ENCODE measurements at regions of chr22 and their contacts with region 1.

Region 1: DNA sequence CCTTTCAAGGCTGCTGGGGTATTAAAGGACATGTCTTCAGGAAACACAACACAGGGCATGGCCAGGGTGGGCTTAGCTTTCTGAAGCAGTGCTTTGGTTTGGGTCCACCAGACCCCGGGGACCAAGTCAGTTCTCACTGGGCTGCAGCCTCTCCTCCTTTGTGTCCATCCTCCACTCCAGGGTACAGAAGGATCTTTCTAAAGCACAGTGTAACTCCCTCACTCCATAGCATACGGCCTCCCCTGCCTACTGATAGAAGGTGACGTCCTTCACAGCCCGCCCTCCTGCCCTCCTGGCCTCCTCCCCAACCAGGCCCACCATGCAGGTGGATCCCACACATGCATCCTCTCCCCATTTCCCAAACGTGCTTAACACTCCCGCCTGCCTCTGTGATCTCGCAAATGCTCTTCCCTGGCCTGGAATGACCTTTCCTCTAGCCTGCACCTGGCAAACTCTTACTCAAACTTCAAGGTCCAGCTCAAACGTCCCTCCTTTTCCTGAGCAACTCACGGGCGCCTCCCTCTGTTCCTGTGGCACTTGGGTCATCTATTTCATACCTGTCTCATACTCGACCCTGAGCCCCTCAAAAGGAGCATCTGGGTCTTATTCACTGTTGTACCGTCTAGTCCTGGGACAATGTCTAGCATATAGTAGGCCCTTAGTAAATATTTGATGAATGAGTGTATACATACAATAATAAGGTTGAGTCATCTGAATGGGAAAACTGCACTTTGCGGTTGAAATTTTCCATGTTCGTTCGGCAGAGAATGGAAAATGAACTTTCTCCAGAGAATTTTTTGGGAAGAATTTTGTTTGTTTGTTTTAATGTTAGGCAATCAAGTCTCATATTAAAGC is 187.7 kb downstream of the EFCAB6 start:
- DNase-seq: no peak
- ATAC-seq: no peak
- H3K4me3 ChIP-seq: no peak overlapping the region
- H3K27ac ChIP-seq: no peak overlapping the region
- H3K4me1 ChIP-seq: no peaks in the 10 kb centered on the region
- H3K27me3 ChIP-seq: peaks cover 0 to 1% of the 10 kb centered on the region in 2 experiments; a peak in 1 of 5 replicates
- CTCF ChIP-seq: no peak
- EP300 ChIP-seq: no peak
- POLR2A ChIP-seq: no peak
- RAD21 ChIP-seq: no peak

Region 2: DNA sequence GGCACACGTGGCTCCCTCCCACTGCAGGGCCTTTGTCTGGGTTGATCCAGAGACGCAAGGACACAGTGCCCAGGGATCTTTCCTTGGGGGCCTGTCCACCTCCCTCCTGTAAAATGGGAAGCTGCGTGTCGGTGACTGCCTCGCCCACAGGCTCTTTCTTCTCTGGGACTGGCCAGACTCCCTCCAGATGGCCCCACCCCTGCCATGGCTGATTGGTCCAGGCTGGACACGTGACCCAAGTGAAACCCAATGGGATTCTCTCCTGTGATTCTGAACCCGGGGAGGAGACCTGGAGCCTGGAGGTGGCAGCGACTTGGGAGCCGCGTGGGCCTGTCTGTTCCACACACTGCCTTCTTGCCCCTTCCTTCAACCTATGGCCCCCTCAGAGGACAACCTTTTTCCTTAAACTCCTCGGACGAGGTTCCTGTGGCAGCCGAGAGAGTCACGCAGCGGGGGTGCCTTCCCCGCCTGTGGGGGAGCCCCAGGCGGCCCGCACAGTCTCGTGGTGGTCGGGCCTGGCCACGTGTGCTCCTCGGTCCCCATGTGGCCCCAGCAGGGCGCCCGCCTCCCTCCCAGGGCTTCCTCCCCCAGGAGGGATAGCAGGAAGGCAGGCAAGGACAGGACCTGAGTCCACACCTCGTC is 224.9 kb before region 1 on chr22:
- CTCF ChIA-PET with region 1: no interaction called
- POLR2A ChIA-PET with region 1: no interaction called
- in situ Hi-C with region 1: no loop called
- intact Hi-C with region 1: loop called (anchors 5 kb)
- DNase-seq: peak; percentile 40 to 80 (median 75)
- ATAC-seq: peak; percentile 87
- H3K4me3 ChIP-seq: no peak overlapping the region
- H3K27ac ChIP-seq: no peak overlapping the region
- H3K4me1 ChIP-seq: peaks cover 0 to 11% of the 10 kb centered on the region in 2 experiments; a peak in 2 of 5 replicates
- H3K27me3 ChIP-seq: peaks cover 0 to 4% of the 10 kb centered on the region in 2 experiments; a peak in 2 of 5 replicates
- CTCF ChIP-seq: no peak
- EP300 ChIP-seq: no peak
- POLR2A ChIP-seq: no peak
- RAD21 ChIP-seq: no peak

Measured in K562 (cell line).